H1 (cell line): ENCODE measurements at regions of chr1 and their contacts with region 1.

Region 1: DNA sequence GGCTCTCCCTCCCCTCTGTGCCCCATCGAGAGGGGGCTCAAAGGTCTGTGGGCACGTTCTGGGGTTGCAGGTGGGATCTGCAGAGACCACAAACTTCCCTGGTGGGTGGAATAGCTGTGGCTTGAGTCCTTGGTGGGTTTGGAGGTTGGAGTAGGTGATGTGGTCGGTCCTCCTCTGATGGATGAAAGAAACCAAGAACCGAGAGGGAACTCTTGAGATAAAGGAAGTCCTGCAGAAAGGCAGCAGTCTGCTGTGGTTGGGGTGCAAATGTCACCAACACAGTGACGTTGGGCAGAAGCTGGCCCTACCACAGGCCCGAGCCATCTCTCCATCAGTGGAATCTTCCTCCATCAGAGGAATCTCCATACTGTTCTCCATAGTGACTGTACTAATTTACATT is 171.8 kb downstream of the FCRL5 start:
- DNase-seq: no peak
- H3K4me3 ChIP-seq: no peak overlapping the region
- H3K27ac ChIP-seq: no peak overlapping the region
- H3K4me1 ChIP-seq: no peaks in the 10 kb centered on the region; a peak in 1 of 7 replicates
- H3K27me3 ChIP-seq: no peaks in the 10 kb centered on the region
- CTCF ChIP-seq: no peak
- EP300 ChIP-seq: no peak
- POLR2A ChIP-seq: no peak
- RAD21 ChIP-seq: no peak

Region 2: GRCh38 chr1:157490467-157491165 is 110.1 kb after region 1 on chr1:
- CTCF ChIA-PET with region 1: interaction called, 41 read pairs
- POLR2A ChIA-PET with region 1: no interaction called
- DNase-seq: peak; percentile 43 to 95
- H3K4me3 ChIP-seq: no peak overlapping the region; a peak in 1 of 8 replicates
- H3K27ac ChIP-seq: no peak overlapping the region
- H3K4me1 ChIP-seq: peaks cover 0 to 3% (median 0%) of the 10 kb centered on the region in 4 experiments; a peak in 1 of 7 replicates
- H3K27me3 ChIP-seq: no peaks in the 10 kb centered on the region; a peak in 2 of 7 replicates
- CTCF ChIP-seq: peak; percentile 56 to 89 (median 68)
- EP300 ChIP-seq: no peak
- POLR2A ChIP-seq: no peak
- RAD21 ChIP-seq: peak; percentile 76 to 80

Region 3: GRCh38 chr1:157496121-157496526 is 115.6 kb after region 1 on chr1:
- CTCF ChIA-PET with region 1: interaction called, 13 read pairs
- POLR2A ChIA-PET with region 1: no interaction called
- DNase-seq: peak in 1 of 2 experiments; percentile 71
- H3K4me3 ChIP-seq: no peak overlapping the region
- H3K27ac ChIP-seq: no peak overlapping the region
- H3K4me1 ChIP-seq: no peaks in the 10 kb centered on the region; a peak in 1 of 7 replicates
- H3K27me3 ChIP-seq: no peaks in the 10 kb centered on the region
- CTCF ChIP-seq: peak; percentile 26 to 87 (median 71)
- EP300 ChIP-seq: no peak
- POLR2A ChIP-seq: no peak
- RAD21 ChIP-seq: peak; percentile 72 to 79